Heart right ventricle (tissue), 16 donors: ENCODE measurements at regions of chr2 and their contacts with region 1.

Region 1: DNA sequence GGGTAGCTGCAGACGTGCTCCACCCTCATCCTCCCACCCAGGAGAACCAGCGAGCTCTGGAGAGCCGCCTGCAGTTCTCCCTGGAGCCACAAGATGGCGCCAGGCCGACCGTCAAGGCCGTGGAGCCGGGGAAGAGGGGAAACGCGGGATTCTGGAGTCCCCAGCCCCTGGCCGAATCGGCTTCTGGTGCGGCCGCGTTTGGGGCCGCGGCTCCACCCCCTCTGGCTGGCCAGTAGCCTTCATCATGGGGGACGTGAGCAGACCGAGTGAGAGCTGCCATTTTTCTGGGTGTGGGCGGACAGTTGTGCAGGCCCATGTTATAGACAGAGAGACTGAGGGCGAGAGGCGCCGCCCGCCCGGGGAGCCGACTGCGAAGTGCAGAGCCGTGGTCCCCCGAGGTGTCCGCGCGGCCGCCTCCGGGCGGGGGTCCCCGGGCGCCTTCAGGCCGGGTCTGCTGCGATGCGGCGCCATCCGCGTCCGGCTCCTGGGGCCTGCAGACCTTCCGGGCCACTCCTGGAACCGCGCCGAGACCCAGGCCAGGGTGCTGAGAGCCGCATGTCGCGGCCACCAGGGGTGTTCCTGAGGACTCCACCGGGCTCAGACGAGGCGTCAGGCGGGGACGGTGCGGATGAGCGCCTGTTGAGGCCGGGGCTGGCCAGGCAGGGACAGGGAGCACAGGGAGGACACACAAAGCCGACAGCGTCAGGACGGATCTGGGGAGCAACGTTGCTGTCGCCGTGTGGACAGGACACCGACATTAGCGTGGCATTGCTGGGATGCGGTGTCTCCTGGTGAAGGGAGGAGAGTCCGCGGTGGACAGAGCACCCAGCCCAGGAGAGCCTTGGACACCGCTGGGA is 418.2 kb upstream of the HS6ST1 start:
- DNase-seq: peak; percentile 79 to 83
- ATAC-seq: peak; percentile 59 to 86 (median 81)
- H3K4me3 ChIP-seq: peak overlapping the region; percentile 4 to 52 (median 39)
- H3K27ac ChIP-seq: no peak overlapping the region
- H3K4me1 ChIP-seq: peaks cover 0 to 55% (median 18%) of the 10 kb centered on the region in 9 donors
- H3K27me3 ChIP-seq: peaks cover 0 to 15% (median 0%) of the 10 kb centered on the region in 7 donors
- CTCF ChIP-seq: peak; percentile 98 to 100 (median 99)

Region 2: DNA sequence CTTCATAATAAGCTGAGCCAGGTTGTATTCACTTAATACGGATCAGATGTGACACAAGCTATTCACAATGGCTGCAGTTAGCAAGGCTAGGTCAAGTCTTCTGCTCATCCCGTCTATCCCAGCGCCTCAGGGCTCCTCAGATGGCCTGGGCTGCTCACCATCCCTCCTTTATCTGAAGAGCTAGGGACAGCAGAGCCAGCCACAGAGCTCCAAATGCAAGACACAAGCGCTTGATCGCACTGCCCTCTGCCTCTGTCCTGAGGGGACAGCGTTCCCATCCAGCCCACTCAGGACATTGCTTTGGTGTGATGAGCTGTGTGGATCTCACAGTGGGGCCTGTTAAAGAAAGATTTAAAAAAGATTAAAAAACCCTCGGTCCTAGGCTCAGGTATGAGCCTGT is 163.8 kb before region 1 on chr2:
- intact Hi-C with region 1: no loop called
- DNase-seq: no peak
- ATAC-seq: peak in 3 of 8 donors; percentile 25 to 66 (median 65)
- H3K4me3 ChIP-seq: no peak overlapping the region
- H3K27ac ChIP-seq: no peak overlapping the region
- H3K4me1 ChIP-seq: no peaks in the 10 kb centered on the region
- H3K27me3 ChIP-seq: no peaks in the 10 kb centered on the region
- CTCF ChIP-seq: peak in 1 of 9 donors; percentile 9

Region 3: DNA sequence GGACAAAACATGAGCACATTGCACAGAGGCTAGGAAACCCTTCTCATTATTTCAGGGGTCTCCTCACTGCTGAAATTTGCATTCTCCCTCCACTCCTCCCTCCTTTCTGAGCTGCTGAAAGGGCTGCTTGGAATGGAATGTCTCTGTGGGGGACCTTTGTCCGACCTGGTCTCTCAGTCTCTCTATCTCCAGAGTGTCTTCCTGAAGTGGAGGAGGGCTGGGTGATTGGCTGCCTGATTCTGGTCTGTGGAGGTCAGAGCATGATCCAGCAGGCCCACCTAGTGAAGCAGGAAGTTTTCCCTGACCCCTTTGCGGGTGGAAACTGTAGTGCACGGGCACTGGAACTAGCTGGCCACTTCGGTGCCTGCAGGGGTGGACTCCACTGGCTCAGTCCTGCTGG is 142.2 kb after region 1 on chr2:
- intact Hi-C with region 1: no loop called
- DNase-seq: no peak
- ATAC-seq: no peak
- H3K4me3 ChIP-seq: no peak overlapping the region
- H3K27ac ChIP-seq: no peak overlapping the region
- H3K4me1 ChIP-seq: no peaks in the 10 kb centered on the region
- H3K27me3 ChIP-seq: peaks cover 0 to 9% (median 0%) of the 10 kb centered on the region in 7 donors
- CTCF ChIP-seq: no peak

Region 4: DNA sequence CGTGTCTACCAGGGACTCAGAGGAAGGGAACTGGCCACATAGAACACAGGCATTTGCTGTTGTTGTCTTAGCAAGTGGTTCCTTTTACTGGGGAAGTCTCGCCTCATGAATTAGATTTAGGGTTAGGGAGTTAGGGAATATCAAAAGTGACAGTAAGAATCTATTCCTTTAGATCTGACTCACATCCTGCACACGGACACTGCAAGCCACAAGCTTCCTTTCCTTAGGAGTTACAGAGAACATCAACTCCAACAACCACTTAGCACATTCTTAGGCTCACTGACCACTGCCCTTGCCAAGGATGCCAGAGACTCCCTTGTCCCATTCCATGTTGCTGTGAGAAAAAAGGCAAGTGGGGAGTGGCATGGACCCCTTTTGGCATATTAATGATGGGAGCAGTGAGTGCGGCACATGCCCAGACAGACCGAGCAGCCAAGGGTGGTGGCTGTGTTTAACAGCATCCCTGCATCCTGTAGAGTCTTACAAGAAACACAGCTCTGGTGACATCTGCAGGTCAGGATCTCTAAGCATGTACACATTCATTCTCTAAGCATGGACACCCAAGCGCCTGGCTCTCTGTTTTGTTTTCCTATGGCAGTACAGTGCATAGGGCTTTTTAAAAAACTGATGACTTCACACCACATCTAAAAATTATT is 497.0 kb after region 1 on chr2:
- intact Hi-C with region 1: loop called in 1 of 10 experiments (anchors 10 kb)
- DNase-seq: no peak
- ATAC-seq: peak in 4 of 8 donors; percentile 41 to 73 (median 66)
- H3K4me3 ChIP-seq: no peak overlapping the region
- H3K27ac ChIP-seq: no peak overlapping the region
- H3K4me1 ChIP-seq: no peaks in the 10 kb centered on the region
- H3K27me3 ChIP-seq: peaks cover 0 to 9% (median 0%) of the 10 kb centered on the region in 7 donors
- CTCF ChIP-seq: peak in 5 of 9 donors; percentile 9 to 33 (median 15)

Region 5: GRCh38 chr2:129253461-129253812 is 516.5 kb after region 1 on chr2:
- intact Hi-C with region 1: loop called in 1 of 10 experiments (anchors 10 kb)
- DNase-seq: no peak
- ATAC-seq: peak in 3 of 8 donors; percentile 52 to 79 (median 55)
- H3K4me3 ChIP-seq: no peak overlapping the region
- H3K27ac ChIP-seq: no peak overlapping the region
- H3K4me1 ChIP-seq: no peaks in the 10 kb centered on the region
- H3K27me3 ChIP-seq: no peaks in the 10 kb centered on the region
- CTCF ChIP-seq: peak in 7 of 9 donors; percentile 24 to 52 (median 40)

Region 6: GRCh38 chr2:129396980-129397599 is 660.2 kb after region 1 on chr2:
- intact Hi-C with region 1: loop called in 5 of 10 experiments (anchors 5 to 10 kb)
- DNase-seq: peak in 1 of 2 donors; percentile 16
- ATAC-seq: peak in 2 of 8 donors; percentile 59 to 69
- H3K4me3 ChIP-seq: no peak overlapping the region
- H3K27ac ChIP-seq: no peak overlapping the region
- H3K4me1 ChIP-seq: peaks cover 0 to 6% (median 0%) of the 10 kb centered on the region in 9 donors
- H3K27me3 ChIP-seq: no peaks in the 10 kb centered on the region
- CTCF ChIP-seq: peak; percentile 33 to 67 (median 57)

Region 7: DNA sequence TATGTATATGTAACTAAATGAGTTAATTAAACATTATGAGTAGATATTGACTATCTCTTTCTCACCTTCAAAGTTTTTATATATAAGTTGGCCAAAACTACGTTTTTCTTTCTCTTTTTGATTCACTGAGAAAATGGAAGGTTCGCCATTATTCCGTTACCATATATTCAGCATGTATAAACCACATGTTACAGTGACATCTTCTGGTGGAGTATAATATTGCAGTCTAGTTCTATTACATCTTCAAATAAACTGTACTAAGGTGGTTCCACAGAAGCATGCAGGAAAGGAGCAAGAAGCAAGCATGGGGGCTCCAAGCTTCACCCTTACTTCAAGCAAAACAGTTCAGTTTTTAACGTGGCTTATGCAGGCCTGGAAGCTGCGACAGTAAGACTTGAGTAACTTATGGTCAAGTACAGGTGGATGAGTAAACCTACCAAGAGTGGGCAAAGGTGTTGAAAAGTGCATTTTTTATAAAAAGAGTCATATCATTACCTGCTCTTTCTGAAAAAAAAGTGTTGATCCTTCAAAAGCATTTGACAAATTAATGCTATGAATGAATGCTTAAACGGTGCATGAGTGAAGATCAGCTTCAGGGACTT is 1112.7 kb after region 1 on chr2:
- intact Hi-C with region 1: loop called in 4 of 10 experiments (anchors 5 to 10 kb)
- DNase-seq: no peak
- ATAC-seq: peak in 1 of 8 donors; percentile 33
- H3K4me3 ChIP-seq: no peak overlapping the region
- H3K27ac ChIP-seq: no peak overlapping the region
- H3K4me1 ChIP-seq: peaks cover 0 to 3% (median 0%) of the 10 kb centered on the region in 9 donors
- H3K27me3 ChIP-seq: peaks cover 0 to 11% (median 0%) of the 10 kb centered on the region in 7 donors
- CTCF ChIP-seq: peak; percentile 57 to 82 (median 73)